Activated CD4-positive, alpha-beta memory T cell treated with anti-CD3 and anti-CD28 coated beads for 36 hours (primary cell): ENCODE measurements at regions of chr1 and their contacts with region 1.

Region 1: DNA sequence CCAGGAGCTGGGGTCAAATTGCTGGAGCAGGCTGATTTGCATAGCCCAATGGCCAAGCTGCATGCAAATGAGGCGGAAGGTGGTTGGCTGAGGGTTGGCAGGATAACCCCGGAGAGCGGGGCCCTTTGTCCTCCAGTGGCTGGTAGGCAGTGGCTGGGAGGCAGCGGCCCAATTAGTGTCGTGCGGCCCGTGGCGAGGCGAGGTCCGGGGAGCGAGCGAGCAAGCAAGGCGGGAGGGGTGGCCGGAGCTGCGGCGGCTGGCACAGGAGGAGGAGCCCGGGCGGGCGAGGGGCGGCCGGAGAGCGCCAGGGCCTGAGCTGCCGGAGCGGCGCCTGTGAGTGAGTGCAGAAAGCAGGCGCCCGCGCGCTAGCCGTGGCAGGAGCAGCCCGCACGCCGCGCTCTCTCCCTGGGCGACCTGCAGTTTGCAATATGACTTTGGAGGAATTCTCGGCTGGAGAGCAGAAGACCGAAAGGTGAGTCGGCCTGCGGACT is at the start of gene GADD45A:
- DNase-seq: peak; percentile 98
- H3K4me3 Mint-ChIP-seq: peak within 1 kb of the TSS; percentile 92
- H3K27ac Mint-ChIP-seq: peak within 1 kb of the TSS; percentile 96
- H3K4me1 Mint-ChIP-seq: peaks cover 47% of the 10 kb centered on the region
- H3K27me3 Mint-ChIP-seq: no peaks in the 10 kb centered on the region
- total RNA-seq, gene GADD45A: 36.2 to 39.1 TPM

Region 2: GRCh38 chr1:66929999-66930822 is 754.9 kb before region 1 on chr1:
- CTCF ChIA-PET with region 1: no interaction called
- POLR2A ChIA-PET with region 1: interaction called, 4 read pairs
- intact Hi-C with region 1: loop called (anchors 1 kb)
- DNase-seq: peak; percentile 96
- H3K4me3 Mint-ChIP-seq: peak overlapping the region; percentile 90
- H3K27ac Mint-ChIP-seq: peak overlapping the region; percentile 96
- H3K4me1 Mint-ChIP-seq: peaks cover 57% of the 10 kb centered on the region
- H3K27me3 Mint-ChIP-seq: no peaks in the 10 kb centered on the region

Region 3: GRCh38 chr1:67332653-67333529 is 352.2 kb before region 1 on chr1:
- CTCF ChIA-PET with region 1: no interaction called
- POLR2A ChIA-PET with region 1: interaction called, 7 read pairs
- intact Hi-C with region 1: loop called (anchors 1 kb)
- DNase-seq: no peak
- H3K4me3 Mint-ChIP-seq: peak overlapping the region; percentile 9
- H3K27ac Mint-ChIP-seq: peak overlapping the region; percentile 82
- H3K4me1 Mint-ChIP-seq: peaks cover 80% of the 10 kb centered on the region
- H3K27me3 Mint-ChIP-seq: no peaks in the 10 kb centered on the region

Region 4: DNA sequence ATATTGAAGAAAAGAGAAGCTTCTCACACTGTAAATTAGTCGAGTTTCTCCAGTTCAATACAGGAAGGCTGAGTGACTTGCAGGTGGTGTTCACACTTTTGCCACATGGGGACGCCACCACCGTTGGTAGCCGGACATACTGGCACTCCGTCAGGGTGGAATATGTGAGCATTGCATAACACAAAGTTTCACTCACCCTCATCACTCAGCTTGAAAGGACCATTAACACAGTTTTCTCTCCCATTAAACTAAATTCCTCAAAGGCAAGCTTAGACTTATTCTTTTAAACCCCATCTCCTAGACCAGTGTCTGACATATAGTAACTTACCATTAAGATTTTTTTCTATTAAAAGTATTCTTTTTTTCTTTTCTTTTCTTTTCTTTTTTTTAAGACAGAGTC is 149.6 kb before region 1 on chr1:
- CTCF ChIA-PET with region 1: interaction called, 7 read pairs
- POLR2A ChIA-PET with region 1: interaction called, 3 read pairs
- intact Hi-C with region 1: loop called (anchors 10 kb)
- DNase-seq: peak; percentile 79
- H3K4me3 Mint-ChIP-seq: no peak overlapping the region
- H3K27ac Mint-ChIP-seq: no peak overlapping the region
- H3K4me1 Mint-ChIP-seq: no peaks in the 10 kb centered on the region
- H3K27me3 Mint-ChIP-seq: peaks cover 4% of the 10 kb centered on the region

Region 5: GRCh38 chr1:67674260-67675011 is 10.7 kb before region 1 on chr1:
- CTCF ChIA-PET with region 1: interaction called, 3 read pairs
- POLR2A ChIA-PET with region 1: interaction called, 18 read pairs
- intact Hi-C with region 1: no loop called
- DNase-seq: peak; percentile 71
- H3K4me3 Mint-ChIP-seq: peak overlapping the region; percentile 40
- H3K27ac Mint-ChIP-seq: peak overlapping the region; percentile 58
- H3K4me1 Mint-ChIP-seq: peaks cover 19% of the 10 kb centered on the region
- H3K27me3 Mint-ChIP-seq: peaks cover 5% of the 10 kb centered on the region

Region 6: GRCh38 chr1:67735806-67736627 is 50.9 kb after region 1 on chr1:
- CTCF ChIA-PET with region 1: interaction called, 3 read pairs
- POLR2A ChIA-PET with region 1: interaction called, 3 read pairs
- intact Hi-C with region 1: loop called (anchors 1 kb)
- DNase-seq: peak; percentile 77
- H3K4me3 Mint-ChIP-seq: peak overlapping the region; percentile 50
- H3K27ac Mint-ChIP-seq: peak overlapping the region; percentile 52
- H3K4me1 Mint-ChIP-seq: peaks cover 12% of the 10 kb centered on the region
- H3K27me3 Mint-ChIP-seq: no peaks in the 10 kb centered on the region